Tibial artery (tissue), 4 donors: ENCODE measurements at regions of chr16 and their contacts with region 1.

Region 1: GRCh38 chr16:63625126-63625525 is 1496.7 kb downstream of the CDH11 start:
- DNase-seq: no peak
- H3K4me3 ChIP-seq: no peak overlapping the region
- H3K27ac ChIP-seq: no peak overlapping the region
- H3K4me1 ChIP-seq: no peaks in the 10 kb centered on the region
- H3K27me3 ChIP-seq: no peaks in the 10 kb centered on the region
- CTCF ChIP-seq: no peak

Region 2: GRCh38 chr16:63712725-63713124 is 87.6 kb after region 1 on chr16:
- intact Hi-C with region 1: no loop called
- DNase-seq: no peak
- H3K4me3 ChIP-seq: no peak overlapping the region
- H3K27ac ChIP-seq: no peak overlapping the region
- H3K4me1 ChIP-seq: peaks cover 0 to 5% (median 0%) of the 10 kb centered on the region in 4 donors
- H3K27me3 ChIP-seq: no peaks in the 10 kb centered on the region
- CTCF ChIP-seq: no peak

Region 3: DNA sequence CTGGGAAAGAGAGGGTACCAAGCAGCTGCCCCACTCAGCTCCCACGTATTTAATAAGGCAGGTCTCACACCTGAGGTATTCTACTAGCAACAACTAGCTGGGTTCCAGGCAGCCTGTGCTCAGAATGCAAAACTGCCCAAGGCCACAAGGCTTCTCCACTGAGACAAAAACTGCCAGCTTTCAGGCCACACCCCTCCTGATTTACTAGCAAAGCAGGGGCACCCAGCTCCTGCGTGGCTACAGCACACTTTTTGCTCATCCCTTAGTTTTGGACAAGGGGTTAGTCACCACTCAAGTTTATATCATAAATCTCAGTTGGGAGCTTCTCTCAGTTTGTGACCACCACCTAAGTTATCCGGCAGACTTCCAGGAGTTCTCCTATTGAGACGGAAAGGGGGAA is 1002.2 kb after region 1 on chr16:
- intact Hi-C with region 1: loop called (anchors 5 kb)
- DNase-seq: no peak
- H3K4me3 ChIP-seq: no peak overlapping the region
- H3K27ac ChIP-seq: no peak overlapping the region
- H3K4me1 ChIP-seq: peaks cover 0 to 11% (median 2%) of the 10 kb centered on the region in 4 donors
- H3K27me3 ChIP-seq: no peaks in the 10 kb centered on the region
- CTCF ChIP-seq: no peak